ENCODE measurements at regions of chr17 and their contacts with region 1.

Region 1: DNA sequence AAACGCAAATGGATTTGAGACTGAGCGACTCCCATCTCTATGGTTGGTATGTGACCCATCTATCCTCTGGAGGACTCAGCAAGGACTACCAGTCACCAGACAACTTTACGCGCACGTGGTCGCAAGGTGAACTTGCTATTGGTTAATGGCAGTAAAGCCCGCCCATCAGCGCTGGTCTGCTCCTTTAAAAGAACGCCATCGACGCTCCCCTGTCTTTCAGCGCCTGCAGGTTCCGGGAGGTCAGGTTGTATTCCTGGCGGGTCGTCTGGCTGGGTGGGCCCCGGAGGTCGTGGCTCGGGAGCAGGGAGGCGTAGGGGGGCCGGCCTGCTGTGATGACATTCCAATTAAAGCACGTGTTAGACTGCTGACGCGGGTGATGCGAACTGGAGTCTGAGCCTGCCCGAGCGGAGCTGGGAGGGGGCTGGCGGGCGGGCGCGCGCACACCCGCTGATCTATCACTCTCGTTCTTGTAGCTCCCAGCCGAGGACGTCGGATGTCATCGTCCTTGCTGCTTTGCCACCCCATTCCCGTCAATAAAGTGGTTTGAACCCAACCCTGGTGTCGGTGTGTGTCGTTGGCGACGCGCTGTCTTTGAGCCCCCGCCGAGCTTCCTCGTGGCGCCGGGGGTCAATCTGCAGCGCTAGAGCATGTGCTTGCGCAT is 15.9 kb upstream of the ERN1 start:
- DNase-seq: peak; percentile 100
- H3K4me3 ChIP-seq: peak overlapping the region; percentile 89
- H3K27ac ChIP-seq: peak overlapping the region; percentile 90
- H3K27me3 ChIP-seq: no peaks in the 10 kb centered on the region
- CTCF ChIP-seq: no peak

Region 2: DNA sequence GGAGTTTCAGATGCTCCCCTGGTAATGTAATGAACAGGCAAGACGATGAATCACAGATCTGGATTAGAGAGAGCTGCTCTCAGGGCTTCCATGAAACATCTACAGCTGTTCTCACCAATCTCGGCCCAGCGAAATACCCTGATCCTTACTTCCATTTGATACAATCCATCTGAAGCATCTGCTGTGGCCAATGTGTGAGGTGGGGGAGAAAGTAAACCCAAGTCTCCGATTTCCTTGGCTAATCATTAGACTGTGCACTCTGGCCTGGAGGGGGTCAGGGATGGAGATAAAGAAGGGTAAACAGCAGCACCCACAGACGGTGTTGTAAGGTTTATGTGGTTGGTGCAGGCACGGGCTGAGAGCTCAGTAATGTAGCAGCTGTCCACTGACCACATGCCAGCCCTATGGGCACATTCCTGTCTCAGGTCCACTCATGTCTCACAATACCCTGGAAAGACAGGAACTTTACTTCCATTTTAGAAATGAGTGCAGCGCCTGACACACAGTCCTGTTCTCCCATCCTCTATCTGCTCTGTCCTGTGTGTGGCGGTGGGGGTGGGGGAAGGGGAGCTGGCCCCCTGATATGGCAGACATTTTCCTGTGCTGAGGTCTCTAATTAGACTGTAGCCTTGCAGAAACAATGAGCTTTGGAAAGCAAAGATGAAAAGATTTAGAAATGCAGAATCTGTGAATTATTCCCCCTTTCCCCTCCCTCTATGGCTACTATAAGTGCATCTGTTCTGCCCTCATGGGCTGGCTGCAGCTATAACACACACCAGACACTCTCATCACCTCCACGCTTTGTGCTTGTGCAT is 32.3 kb after region 1 on chr17:
- CTCF ChIA-PET with region 1: no interaction called
- POLR2A ChIA-PET with region 1: interaction called, 11 read pairs
- DNase-seq: no peak
- H3K4me3 ChIP-seq: no peak overlapping the region
- H3K27ac ChIP-seq: peak overlapping the region; percentile 73
- H3K27me3 ChIP-seq: no peaks in the 10 kb centered on the region
- CTCF ChIP-seq: no peak

Region 3: DNA sequence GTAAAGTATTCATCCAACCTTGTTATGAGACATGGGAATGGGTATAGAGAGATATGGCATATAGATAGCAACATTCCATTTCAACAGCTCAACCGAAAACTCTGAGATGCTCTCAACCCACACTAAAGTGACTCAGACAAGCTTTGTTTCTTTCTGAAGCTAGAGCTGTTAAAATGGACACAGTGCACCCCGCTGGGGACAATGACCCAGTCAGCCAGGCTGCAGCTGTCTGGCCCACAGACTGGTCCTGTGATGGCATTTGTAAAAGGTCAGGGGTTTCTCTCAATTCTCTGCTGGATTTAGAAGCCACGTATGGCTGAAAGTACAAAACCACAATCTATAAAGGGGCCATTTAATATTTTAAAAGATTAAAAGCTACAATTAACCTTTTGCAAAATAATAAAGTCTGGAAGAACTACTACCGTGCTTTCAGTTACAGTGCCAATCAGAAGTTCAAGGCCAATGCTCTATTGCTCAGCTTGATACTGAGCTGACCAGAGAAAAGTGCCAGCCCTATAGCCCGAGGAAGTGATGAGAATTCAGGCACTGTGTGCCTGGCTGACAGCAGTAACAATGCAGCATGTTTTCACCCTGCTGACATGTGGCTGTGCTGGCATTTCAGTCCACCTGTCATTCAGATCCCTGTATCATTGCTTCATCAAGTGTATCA is 56.9 kb after region 1 on chr17:
- CTCF ChIA-PET with region 1: no interaction called
- POLR2A ChIA-PET with region 1: interaction called, 11 read pairs
- DNase-seq: no peak
- H3K4me3 ChIP-seq: no peak overlapping the region
- H3K27ac ChIP-seq: no peak overlapping the region
- H3K27me3 ChIP-seq: no peaks in the 10 kb centered on the region
- CTCF ChIP-seq: no peak

Region 4: DNA sequence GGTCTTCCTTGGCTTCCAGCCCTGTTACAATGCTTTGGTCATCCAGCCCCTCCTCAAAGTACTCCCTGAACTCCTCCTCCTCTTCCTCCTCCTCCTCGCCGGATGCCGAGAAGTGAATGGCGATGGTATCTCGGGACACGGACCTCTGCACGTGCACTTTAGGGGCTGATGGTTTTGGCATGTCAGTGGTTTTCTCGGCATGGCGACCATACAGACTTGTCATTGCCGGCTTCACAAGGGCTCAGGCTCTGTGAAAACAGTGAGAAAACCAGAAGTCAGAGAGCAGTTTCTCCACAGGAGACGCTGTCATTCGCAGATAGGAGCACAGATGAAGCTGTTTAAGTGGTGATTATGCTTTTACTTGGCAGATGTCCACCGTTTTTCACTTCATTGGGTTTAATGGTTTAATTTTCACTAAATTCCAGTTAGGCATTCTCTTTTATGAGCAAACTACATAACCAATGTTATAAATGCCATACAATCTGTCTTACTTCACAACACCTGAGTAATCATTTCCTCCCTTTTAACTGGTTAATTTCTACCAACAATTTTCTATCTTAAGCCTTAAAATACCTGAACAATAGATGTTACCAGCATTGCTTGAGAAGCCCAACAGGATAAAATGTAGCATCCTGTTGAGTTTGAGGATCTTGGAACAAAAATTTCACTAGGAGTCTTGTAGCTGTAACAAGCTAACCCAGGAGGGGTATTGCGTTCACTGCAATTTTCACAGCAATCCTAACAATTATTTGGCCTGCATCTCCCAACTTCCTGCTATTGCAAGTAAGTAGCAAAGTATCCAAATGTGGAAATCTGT is 68.3 kb after region 1 on chr17:
- CTCF ChIA-PET with region 1: no interaction called
- POLR2A ChIA-PET with region 1: interaction called, 16 read pairs
- DNase-seq: no peak
- H3K4me3 ChIP-seq: no peak overlapping the region
- H3K27ac ChIP-seq: no peak overlapping the region
- H3K27me3 ChIP-seq: no peaks in the 10 kb centered on the region
- CTCF ChIP-seq: no peak

Region 5: GRCh38 chr17:64230795-64231408 is 85.0 kb after region 1 on chr17:
- CTCF ChIA-PET with region 1: no interaction called
- POLR2A ChIA-PET with region 1: interaction called, 10 read pairs
- DNase-seq: peak; percentile 84
- H3K4me3 ChIP-seq: no peak overlapping the region
- H3K27ac ChIP-seq: peak overlapping the region; percentile 89
- H3K27me3 ChIP-seq: no peaks in the 10 kb centered on the region
- CTCF ChIP-seq: 0 out of 2 replicates have a peak, but pooled peaks have one; percentile 13

Region 6: DNA sequence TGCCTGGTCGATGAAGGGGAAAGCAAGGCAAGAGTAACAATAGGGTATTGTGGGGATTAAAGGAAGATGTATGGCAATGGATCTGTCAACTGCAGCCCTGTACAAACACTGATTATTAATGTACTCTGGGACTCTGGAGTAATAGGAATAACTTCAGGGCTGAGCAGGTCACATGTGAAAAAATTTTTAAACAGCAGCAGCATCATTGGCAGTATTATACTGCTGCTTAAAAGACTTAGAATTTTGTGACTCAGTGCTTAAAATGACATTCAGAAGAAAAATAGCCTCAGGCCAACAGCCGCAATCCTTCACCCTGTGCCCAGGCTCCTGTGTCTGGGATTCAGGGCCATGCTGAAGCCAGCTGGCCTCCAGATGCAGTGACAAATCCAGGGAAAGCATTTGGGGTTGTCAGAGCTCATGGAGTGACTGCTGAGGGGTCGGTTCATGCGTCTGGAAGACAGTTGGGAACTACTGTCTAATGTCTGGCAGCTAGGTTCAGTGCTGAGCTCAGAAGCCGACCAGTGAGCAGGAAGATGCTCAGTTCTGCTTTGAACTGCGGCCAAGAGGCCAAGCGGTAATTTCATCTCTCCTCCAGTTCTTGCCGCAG is 95.0 kb after region 1 on chr17:
- CTCF ChIA-PET with region 1: no interaction called
- POLR2A ChIA-PET with region 1: interaction called, 20 read pairs
- DNase-seq: peak; percentile 64
- H3K4me3 ChIP-seq: no peak overlapping the region; the same call in 1 of the 2 replicates
- H3K27ac ChIP-seq: peak overlapping the region; percentile 75
- H3K27me3 ChIP-seq: no peaks in the 10 kb centered on the region
- CTCF ChIP-seq: no peak

Region 7: GRCh38 chr17:64281962-64282727 is 136.3 kb after region 1 on chr17:
- CTCF ChIA-PET with region 1: interaction called, 13 read pairs
- POLR2A ChIA-PET with region 1: interaction called, 16 read pairs
- DNase-seq: peak; percentile 61
- H3K4me3 ChIP-seq: no peak overlapping the region
- H3K27ac ChIP-seq: no peak overlapping the region
- H3K27me3 ChIP-seq: peaks cover 5% of the 10 kb centered on the region
- CTCF ChIP-seq: peak; percentile 84

Measured in AG04450 (cell line).